Activated CD4-positive, alpha-beta memory T cell treated with anti-CD3 and anti-CD28 coated beads, Interleukin-2, amount 10 ng/mL, durations not matched to agents 7 days and 5 days (primary cell): ENCODE measurements at regions of chr7 and their contacts with region 1.

Region 1: GRCh38 chr7:106542550-106543220 is 118.3 kb downstream of the CCDC71L start:
- DNase-seq: peak; percentile 52
- H3K4me3 Mint-ChIP-seq: no peak overlapping the region
- H3K27ac Mint-ChIP-seq: no peak overlapping the region
- H3K4me1 Mint-ChIP-seq: peaks cover 17% of the 10 kb centered on the region
- H3K27me3 Mint-ChIP-seq: no peaks in the 10 kb centered on the region

Region 2: GRCh38 chr7:106563466-106564150 is 20.9 kb after region 1 on chr7:
- CTCF ChIA-PET with region 1: no interaction called
- POLR2A ChIA-PET with region 1: no interaction called
- DNase-seq: no peak
- H3K4me3 Mint-ChIP-seq: no peak overlapping the region
- H3K27ac Mint-ChIP-seq: no peak overlapping the region
- H3K4me1 Mint-ChIP-seq: peaks cover 19% of the 10 kb centered on the region
- H3K27me3 Mint-ChIP-seq: no peaks in the 10 kb centered on the region

Region 3: DNA sequence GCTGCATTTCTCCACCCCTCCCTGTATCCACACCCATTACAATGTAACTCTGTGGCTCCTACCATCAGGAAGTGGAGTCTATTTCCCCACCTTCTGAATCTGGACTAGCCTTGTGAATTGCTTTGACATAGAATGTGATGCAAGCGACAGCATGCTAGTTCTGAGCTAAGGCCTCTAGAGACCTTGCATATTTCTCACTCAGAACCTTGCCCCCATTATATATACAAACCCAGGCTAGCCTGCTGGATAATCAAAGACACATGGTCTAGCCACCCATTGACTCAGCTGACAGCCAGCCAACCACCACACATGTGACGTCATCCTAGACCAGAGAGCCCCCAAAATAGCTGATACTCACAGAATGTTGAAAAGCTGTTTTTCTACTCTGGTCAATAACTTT is 40.4 kb after region 1 on chr7:
- CTCF ChIA-PET with region 1: no interaction called
- POLR2A ChIA-PET with region 1: no interaction called
- DNase-seq: no peak
- H3K4me3 Mint-ChIP-seq: no peak overlapping the region
- H3K27ac Mint-ChIP-seq: no peak overlapping the region
- H3K4me1 Mint-ChIP-seq: no peaks in the 10 kb centered on the region
- H3K27me3 Mint-ChIP-seq: no peaks in the 10 kb centered on the region

Region 4: DNA sequence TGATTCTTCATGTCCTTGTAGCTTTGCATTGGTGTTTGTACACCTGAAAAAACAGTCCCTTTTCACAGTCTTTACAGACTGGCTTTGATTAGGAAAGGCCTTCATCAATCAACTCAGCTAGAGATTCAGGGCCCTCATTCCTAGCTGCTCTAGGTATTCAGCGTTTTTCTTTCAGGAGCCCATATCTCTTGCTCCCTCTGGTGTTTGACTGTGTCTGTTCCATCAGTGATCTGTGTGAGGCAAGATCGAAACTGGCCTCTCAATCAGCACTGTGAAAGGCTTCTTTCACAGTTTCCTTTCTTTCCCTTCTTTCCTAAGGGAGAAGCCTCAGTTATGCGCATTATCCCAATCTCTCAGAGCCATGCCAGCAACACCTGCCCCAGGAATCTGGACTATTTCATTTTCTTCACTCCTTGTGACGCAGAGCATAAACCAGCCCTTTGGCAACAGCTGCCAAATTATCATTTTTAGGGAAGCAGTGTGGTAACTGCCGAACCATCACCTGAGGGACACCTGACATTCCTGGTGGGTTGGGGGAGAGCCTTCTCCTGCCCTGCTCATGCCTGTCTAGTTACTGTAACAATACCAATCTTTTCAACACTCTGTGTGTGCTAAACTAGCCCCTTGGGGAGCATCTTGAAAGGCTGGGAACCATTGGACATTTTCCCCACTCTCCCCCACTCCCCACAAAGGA is 194.0 kb after region 1 on chr7:
- CTCF ChIA-PET with region 1: interaction called, 31 read pairs
- POLR2A ChIA-PET with region 1: interaction called, 6 read pairs
- DNase-seq: peak; percentile 46
- H3K4me3 Mint-ChIP-seq: no peak overlapping the region
- H3K27ac Mint-ChIP-seq: no peak overlapping the region
- H3K4me1 Mint-ChIP-seq: peaks cover 31% of the 10 kb centered on the region
- H3K27me3 Mint-ChIP-seq: no peaks in the 10 kb centered on the region

Region 5: GRCh38 chr7:107286751-107287621 is 744.3 kb after region 1 on chr7:
- CTCF ChIA-PET with region 1: no interaction called
- POLR2A ChIA-PET with region 1: no interaction called
- DNase-seq: no peak
- H3K4me3 Mint-ChIP-seq: no peak overlapping the region
- H3K27ac Mint-ChIP-seq: no peak overlapping the region
- H3K4me1 Mint-ChIP-seq: no peaks in the 10 kb centered on the region
- H3K27me3 Mint-ChIP-seq: no peaks in the 10 kb centered on the region